ENCODE measurements at regions of chr12 and their contacts with region 1.

Region 1: DNA sequence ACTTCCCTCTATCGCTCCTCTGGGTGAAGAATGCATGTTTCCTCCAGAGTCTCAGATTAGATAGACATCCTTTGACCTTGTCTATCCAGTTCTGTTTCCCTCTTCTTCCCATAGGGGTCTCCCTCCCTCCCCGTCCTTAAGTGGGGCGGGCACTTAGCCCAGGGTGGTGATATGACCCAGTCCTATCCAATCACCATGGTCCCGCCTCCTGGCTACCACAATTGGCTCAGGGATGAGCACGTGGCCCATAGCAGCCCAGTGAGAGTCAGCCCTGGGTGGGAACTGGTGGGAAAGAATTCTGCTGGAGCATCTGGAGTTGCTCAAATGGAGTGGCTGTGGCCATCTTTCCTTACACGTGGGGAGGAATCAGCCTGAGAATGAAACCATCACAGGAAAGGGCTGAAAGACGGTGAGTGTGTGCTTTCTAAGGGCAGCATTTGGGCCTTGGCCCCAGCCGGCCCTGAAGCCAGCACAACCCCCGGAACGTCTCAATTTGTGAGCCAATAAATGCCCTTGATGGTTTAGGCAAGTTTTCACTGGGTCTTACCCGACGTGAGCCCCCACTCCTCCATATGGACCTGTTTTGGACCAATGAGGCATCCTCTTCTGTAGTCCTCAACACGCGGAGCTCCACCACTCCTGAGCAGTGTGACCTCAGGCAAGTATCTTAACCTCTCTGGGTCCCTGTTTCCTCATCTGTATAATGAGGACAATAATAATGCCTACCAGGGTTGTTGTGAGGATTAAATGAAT is 14.4 kb upstream of the MLXIP start:
- DNase-seq: peak; percentile 58
- ATAC-seq: peak; percentile 66
- H3K4me3 ChIP-seq: no peak overlapping the region
- H3K4me3 Mint-ChIP-seq: no peak overlapping the region
- H3K27ac ChIP-seq: no peak overlapping the region
- H3K27ac Mint-ChIP-seq: peak overlapping the region; percentile 65
- H3K4me1 ChIP-seq: peaks cover 30 to 49% of the 10 kb centered on the region in 2 donors
- H3K4me1 Mint-ChIP-seq: peaks cover 47% of the 10 kb centered on the region
- H3K27me3 ChIP-seq: no peaks in the 10 kb centered on the region
- H3K27me3 Mint-ChIP-seq: no peaks in the 10 kb centered on the region
- CTCF ChIP-seq: no peak

Region 2: GRCh38 chr12:121530600-121531355 is 533.4 kb before region 1 on chr12:
- CTCF ChIA-PET with region 1: no interaction called
- POLR2A ChIA-PET with region 1: interaction called, 10 read pairs
- intact Hi-C with region 1: no loop called
- DNase-seq: peak; percentile 83
- ATAC-seq: peak; percentile 58
- H3K4me3 ChIP-seq: peak overlapping the region in 1 of 5 experiments; percentile 16
- H3K4me3 Mint-ChIP-seq: peak overlapping the region; percentile 59
- H3K27ac ChIP-seq: peak overlapping the region; percentile 52 to 92
- H3K27ac Mint-ChIP-seq: peak overlapping the region; percentile 91
- H3K4me1 ChIP-seq: peaks cover 48 to 57% of the 10 kb centered on the region in 2 donors
- H3K4me1 Mint-ChIP-seq: peaks cover 57% of the 10 kb centered on the region
- H3K27me3 ChIP-seq: no peaks in the 10 kb centered on the region
- H3K27me3 Mint-ChIP-seq: no peaks in the 10 kb centered on the region
- CTCF ChIP-seq: no peak

Region 3: DNA sequence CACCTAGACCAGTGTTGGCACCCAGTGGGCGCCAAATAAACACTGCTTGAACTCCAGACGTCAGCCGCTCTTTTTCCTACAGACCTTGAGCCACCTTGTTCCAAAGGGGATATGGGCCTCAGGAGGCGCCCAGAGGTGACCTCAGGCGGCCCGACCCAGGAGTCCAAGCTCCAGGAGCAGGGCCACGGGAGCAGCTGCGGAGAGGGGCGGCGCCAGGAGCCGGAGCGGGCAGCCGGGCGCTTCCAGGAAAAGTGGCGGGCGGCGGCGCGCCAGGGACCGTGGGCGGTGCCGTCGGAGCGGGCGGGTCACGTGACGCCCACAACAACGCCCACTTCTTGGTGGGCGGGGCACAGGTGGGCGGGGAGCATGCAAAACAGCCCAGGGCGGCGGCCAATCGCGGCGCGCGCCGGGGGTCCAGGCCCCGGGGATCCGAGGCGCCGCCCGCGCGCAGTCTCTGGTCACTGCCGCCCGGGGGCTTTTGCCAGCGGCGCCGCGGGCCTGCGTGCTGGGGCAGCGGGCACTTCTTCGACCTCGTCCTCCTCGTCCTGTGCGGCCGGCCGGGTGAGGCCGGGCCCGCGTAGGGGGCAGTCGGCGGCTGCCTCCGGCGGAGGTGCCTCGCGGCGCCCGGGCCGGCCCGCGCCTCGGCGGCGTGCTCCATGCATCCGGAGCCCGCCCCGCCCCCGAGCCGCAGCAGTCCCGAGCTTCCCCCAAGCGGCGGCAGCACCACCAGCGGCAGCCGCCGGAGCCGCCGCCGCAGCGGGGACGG is 437.9 kb before region 1 on chr12 and contains the start of gene ORAI1:
- CTCF ChIA-PET with region 1: no interaction called
- POLR2A ChIA-PET with region 1: no interaction called
- intact Hi-C with region 1: no loop called
- DNase-seq: peak; percentile 97
- ATAC-seq: peak; percentile 76
- H3K4me3 ChIP-seq: peak within 1 kb of the TSS; percentile 61 to 93 (median 82)
- H3K4me3 Mint-ChIP-seq: peak within 1 kb of the TSS; percentile 96
- H3K27ac ChIP-seq: peak within 1 kb of the TSS; percentile 87 to 91
- H3K27ac Mint-ChIP-seq: peak within 1 kb of the TSS; percentile 96
- H3K4me1 ChIP-seq: peaks cover 40 to 50% of the 10 kb centered on the region in 2 donors
- H3K4me1 Mint-ChIP-seq: peaks cover 48% of the 10 kb centered on the region
- H3K27me3 ChIP-seq: no peaks in the 10 kb centered on the region
- H3K27me3 Mint-ChIP-seq: no peaks in the 10 kb centered on the region
- CTCF ChIP-seq: no peak
- total RNA-seq, gene ORAI1: 43.2 and 44.2 TPM in 2 replicates

Region 4: DNA sequence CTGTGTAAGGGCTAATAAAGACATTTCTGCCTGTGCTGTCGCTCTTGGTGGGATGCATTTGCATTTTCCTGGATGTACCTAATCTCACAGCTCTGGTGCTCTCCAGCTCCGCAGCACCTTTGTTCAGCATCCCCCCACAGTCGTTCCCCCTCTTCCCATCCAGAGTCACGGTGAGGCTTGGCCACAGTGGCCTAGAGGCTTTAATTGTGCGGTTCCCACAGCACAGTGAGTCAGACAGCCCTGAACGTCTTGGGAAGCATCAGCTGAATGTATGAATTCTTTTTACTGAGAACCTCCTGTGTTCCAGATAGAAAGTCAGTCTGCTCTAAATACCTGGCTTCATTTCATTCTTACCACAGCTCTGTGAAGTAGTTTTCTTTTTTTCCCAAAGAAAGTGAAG is 43.1 kb after region 1 on chr12:
- CTCF ChIA-PET with region 1: interaction called, 4 read pairs
- POLR2A ChIA-PET with region 1: interaction called, 3 read pairs
- intact Hi-C with region 1: loop called (anchors 5 kb)
- DNase-seq: no peak
- ATAC-seq: no peak
- H3K4me3 ChIP-seq: no peak overlapping the region
- H3K4me3 Mint-ChIP-seq: no peak overlapping the region
- H3K27ac ChIP-seq: no peak overlapping the region
- H3K27ac Mint-ChIP-seq: no peak overlapping the region
- H3K4me1 ChIP-seq: peaks cover 25 to 28% of the 10 kb centered on the region in 2 donors
- H3K4me1 Mint-ChIP-seq: peaks cover 57% of the 10 kb centered on the region
- H3K27me3 ChIP-seq: no peaks in the 10 kb centered on the region
- H3K27me3 Mint-ChIP-seq: no peaks in the 10 kb centered on the region
- CTCF ChIP-seq: no peak